PC-9 (cell line): ENCODE measurements at regions of chr16 and their contacts with region 1.

Region 1: DNA sequence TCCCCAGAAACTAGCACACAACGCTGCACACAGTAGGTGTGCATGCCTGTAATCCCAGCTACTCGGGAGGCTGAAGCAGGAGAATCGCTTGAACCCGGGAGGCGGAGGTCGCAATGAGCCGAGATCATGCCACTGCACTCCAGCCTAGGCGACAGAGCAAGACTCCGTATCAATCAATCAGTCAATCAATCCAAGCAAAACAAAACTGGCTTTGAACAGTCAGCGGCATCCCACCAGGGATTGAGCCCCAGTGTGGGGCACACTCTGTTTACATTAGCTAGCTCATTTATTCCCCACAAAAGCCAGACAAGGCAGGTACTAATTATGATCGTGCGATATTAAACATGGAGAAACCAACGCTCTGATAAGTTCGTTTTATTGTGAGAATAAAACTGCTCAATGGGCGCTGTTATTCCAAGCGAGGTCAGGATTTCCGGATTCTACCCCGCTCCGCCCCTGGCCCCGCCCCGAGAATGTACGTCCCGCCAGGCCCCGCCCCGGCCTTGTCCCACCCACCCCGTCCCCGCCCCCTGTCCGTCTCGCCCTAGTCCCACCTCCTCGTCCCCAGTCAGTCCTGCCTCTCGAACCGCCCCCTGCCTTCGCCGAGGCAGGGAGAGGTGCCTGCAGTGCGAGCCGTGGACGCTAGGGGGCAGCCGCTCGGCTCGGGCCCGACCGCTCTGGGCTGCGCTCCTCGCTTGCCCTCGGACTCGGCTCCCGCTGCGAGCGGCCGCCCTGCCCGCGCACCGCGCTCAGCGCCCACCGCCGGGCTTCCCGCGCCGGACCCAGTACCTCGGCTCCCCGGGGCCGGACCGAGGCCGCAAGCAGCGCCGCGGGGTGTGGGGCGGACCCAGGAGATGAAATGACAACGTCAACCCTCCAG is at the start of gene VPS4A:
- DNase-seq: peak; percentile 81 to 98
- H3K4me3 ChIP-seq: peak within 1 kb of the TSS; percentile 82
- H3K27ac ChIP-seq: peak within 1 kb of the TSS; percentile 54
- H3K4me1 ChIP-seq: peaks cover 8% of the 10 kb centered on the region
- H3K27me3 ChIP-seq: no peaks in the 10 kb centered on the region
- CTCF ChIP-seq: peak; percentile 66
- total RNA-seq, gene VPS4A: 25.4 and 26.7 TPM in 2 replicates

Region 2: GRCh38 chr16:69187446-69188235 is 123.3 kb before region 1 on chr16:
- CTCF ChIA-PET with region 1: no interaction called
- POLR2A ChIA-PET with region 1: no interaction called
- intact Hi-C with region 1: loop called (anchors 1 kb)
- DNase-seq: peak; percentile 34 to 37
- H3K4me3 ChIP-seq: peak overlapping the region; percentile 68
- H3K27ac ChIP-seq: no peak overlapping the region
- H3K4me1 ChIP-seq: peaks cover 46% of the 10 kb centered on the region
- H3K27me3 ChIP-seq: no peaks in the 10 kb centered on the region
- CTCF ChIP-seq: no peak